RWPE1 (cell line): ENCODE measurements at regions of chr2 and their contacts with region 1.

Region 1: DNA sequence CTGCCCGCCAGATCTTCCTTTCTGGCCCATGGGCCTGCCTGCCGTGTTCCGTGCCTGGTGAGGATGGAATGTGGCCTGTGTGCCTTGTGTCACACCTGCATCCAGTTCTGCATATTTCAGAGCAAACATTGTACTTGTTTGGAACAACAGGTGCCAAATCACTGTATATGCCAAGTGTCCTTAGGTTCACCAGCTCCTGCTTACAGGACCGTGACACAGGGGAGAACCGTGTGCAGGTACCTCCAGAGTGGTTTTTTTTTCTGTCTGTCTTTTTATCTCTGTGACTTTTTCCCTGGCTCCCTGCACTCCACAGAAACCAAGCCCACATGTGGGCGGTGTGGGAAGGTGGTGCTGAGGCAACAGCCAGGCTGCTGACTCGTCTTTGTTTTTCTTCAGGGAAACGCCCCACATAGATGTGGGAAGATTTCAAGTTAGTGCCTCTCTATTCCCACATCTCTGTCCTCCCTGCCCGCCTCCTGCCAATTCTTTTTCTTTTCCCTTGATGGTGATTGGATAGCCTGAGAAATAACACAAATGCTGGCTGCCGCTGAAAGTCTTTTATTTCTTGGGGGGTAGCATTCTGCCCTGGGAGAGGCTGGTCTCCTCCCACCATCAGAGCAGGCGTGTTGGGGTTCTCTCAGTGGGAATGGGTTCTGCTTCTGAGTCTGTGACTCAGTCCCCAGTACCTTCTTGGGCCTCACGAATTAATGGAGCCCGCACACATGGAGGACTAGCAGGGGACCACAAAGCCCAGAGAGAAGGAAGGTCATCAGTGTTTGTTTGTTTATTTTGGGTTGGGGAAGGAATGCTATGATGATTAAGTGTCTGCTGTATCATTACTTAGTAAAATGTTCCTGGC is 21.4 kb downstream of the GRHL1 start:
- DNase-seq: peak; percentile 39
- H3K27ac ChIP-seq: no peak overlapping the region
- CTCF ChIP-seq: no peak

Region 2: DNA sequence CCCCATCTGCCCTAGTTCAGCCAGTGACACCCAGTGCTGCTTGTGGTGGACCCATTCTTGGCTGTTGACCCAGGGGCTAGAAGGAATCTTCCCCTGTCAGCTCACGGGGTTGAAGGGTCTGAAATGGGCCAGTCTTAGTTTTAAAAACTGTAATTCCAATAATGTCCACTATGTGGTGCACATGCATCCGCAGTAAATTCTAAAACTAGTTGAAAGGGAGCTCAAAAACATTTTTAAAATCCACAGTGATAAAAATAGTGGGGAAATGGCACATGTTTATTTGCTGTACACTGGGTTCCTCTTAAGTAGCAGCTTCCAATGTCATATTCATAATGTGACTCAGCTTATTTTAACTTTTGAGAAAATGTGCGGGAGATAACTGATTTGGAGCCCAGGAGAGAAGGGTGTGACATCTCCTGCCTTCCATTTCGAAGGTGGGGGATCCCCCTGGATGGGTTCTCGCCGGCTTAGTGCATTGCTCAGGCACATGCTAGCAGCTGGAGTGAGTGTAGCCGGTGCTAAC is 11.4 kb after region 1 on chr2:
- CTCF ChIA-PET with region 1: interaction called, 12 read pairs
- POLR2A ChIA-PET with region 1: no interaction called
- DNase-seq: peak; percentile 65
- H3K27ac ChIP-seq: no peak overlapping the region
- CTCF ChIP-seq: peak; percentile 79